SK-N-SH (cell line): ENCODE measurements at regions of chr22 and their contacts with region 1.

Region 1: DNA sequence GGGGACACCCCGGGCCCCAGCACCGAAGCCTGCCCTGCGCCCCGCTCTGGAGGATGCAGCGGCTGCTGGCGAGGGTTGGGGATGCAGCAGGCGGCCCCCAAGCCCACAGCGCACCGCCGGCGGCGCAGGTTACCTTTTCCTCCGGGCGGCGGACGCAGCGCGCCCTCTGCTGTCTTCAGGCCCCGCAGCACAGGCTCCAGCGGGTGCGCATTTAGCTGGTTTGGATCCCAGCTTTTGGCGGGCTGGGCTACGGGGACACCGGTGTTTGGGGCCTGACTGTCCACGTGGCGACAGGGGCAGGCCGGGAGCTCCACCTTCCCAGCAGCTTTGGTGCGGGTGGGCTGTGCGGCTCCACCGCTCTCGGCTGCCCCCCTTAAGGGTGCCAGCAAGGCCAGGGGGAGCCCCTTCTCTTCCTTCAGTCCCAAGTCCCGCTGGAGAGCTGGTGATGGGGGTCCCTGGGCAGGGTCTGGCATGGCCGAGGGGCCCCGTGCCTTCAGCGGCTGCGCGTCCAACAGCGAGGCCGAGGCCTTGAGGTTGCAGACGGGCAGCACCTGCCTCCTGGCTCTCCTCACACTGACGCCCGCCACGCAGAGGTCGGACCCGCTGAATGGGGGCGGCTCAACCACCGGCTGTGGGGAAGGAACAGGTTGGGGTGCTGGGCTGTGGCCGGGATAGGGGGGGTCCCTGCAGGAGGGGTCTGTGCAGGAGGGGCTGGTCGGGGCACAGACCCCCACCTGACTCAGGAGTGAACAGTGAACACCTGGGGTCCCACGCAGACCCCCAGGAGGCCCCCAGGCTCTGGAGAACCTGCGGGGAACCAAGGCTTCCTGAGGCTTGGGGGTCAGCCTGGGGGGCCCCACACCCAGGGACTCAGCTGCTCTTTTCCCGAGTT is 18.0 kb upstream of the IL17REL start:
- DNase-seq: peak; percentile 92
- H3K4me3 ChIP-seq: peak overlapping the region in 1 of 2 experiments; percentile 19; a peak in 1 of 4 replicates
- H3K27ac ChIP-seq: no peak overlapping the region
- H3K4me1 ChIP-seq: peaks cover 0 to 13% of the 10 kb centered on the region in 2 experiments; a peak in 1 of 4 replicates
- H3K27me3 ChIP-seq: no peaks in the 10 kb centered on the region; the same call in 1 of the 2 replicates
- CTCF ChIP-seq: peak; percentile 75
- EP300 ChIP-seq: no peak
- RAD21 ChIP-seq: peak; percentile 80

Region 2: GRCh38 chr22:49917974-49918910 is 112.3 kb before region 1 on chr22 and contains the starts of genes ALG12 and CRELD2:
- CTCF ChIA-PET with region 1: interaction called, 11 read pairs
- POLR2A ChIA-PET with region 1: no interaction called
- DNase-seq: peak; percentile 100
- H3K4me3 ChIP-seq: peak within 1 kb of the TSS; percentile 72 to 83
- H3K27ac ChIP-seq: peak within 1 kb of the TSS; percentile 88 to 93
- H3K4me1 ChIP-seq: peaks cover 0 to 12% of the 10 kb centered on the region in 2 experiments; a peak in 2 of 4 replicates
- H3K27me3 ChIP-seq: no peaks in the 10 kb centered on the region
- CTCF ChIP-seq: no peak
- EP300 ChIP-seq: no peak
- RAD21 ChIP-seq: no peak
- polyA plus RNA-seq, gene ALG12: 7.5 and 9.9 TPM in 2 replicates
- polyA plus RNA-seq, gene CRELD2: 92.5 and 113 TPM in 2 replicates

Region 3: GRCh38 chr22:49962012-49962750 is 68.4 kb before region 1 on chr22:
- CTCF ChIA-PET with region 1: interaction called, 17 read pairs
- POLR2A ChIA-PET with region 1: no interaction called
- DNase-seq: peak; percentile 89
- H3K4me3 ChIP-seq: peak overlapping the region; percentile 67 to 76
- H3K27ac ChIP-seq: peak overlapping the region; percentile 55 to 74; a peak in 3 of 4 replicates
- H3K4me1 ChIP-seq: peaks cover 20 to 29% of the 10 kb centered on the region in 2 experiments; a peak in 2 of 4 replicates
- H3K27me3 ChIP-seq: no peaks in the 10 kb centered on the region
- CTCF ChIP-seq: no peak
- EP300 ChIP-seq: peak in 1 of 2 experiments; percentile 11; a peak in 1 of 4 replicates
- RAD21 ChIP-seq: no peak

Region 4: DNA sequence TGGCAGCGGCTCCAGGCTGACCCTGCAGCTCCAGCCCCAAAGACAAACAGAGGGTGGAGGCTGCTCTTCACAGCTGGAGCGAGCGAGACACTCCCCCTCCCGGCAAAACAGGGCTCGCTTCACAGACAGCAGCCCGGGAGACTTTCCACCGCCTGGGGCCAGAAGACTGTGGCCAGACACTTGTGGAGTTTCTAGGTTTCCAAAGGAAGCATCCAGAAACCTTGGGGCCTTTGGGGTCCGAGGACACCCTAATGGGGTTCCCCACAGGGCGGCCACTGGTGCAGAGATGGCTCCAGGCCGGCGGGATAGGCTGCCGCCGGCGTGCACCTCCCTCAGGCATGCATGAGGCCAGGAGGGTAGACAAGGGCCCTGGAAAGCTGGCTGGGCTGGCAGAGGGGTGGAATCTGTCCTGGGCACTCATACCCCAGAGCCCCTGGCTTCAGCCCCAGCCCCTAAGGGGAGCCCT is 17.8 kb before region 1 on chr22 and contains the start of gene IL17REL:
- CTCF ChIA-PET with region 1: interaction called, 20 read pairs
- POLR2A ChIA-PET with region 1: no interaction called
- DNase-seq: peak; percentile 43
- H3K4me3 ChIP-seq: no peak within 1 kb of the TSS
- H3K27ac ChIP-seq: no peak within 1 kb of the TSS
- H3K4me1 ChIP-seq: no peaks in the 10 kb centered on the region
- H3K27me3 ChIP-seq: peaks cover 67% of the 10 kb centered on the region
- CTCF ChIP-seq: no peak
- EP300 ChIP-seq: no peak
- RAD21 ChIP-seq: no peak
- polyA plus RNA-seq, gene IL17REL: not detected in 2 replicates

Region 5: GRCh38 chr22:50048061-50048765 is 17.7 kb after region 1 on chr22:
- CTCF ChIA-PET with region 1: interaction called, 12 read pairs
- POLR2A ChIA-PET with region 1: no interaction called
- DNase-seq: no peak
- H3K4me3 ChIP-seq: no peak overlapping the region
- H3K27ac ChIP-seq: no peak overlapping the region
- H3K4me1 ChIP-seq: no peaks in the 10 kb centered on the region
- H3K27me3 ChIP-seq: peaks cover 12% of the 10 kb centered on the region
- CTCF ChIP-seq: no peak
- EP300 ChIP-seq: no peak
- RAD21 ChIP-seq: no peak

Region 6: GRCh38 chr22:50067244-50067643 is 36.7 kb after region 1 on chr22:
- CTCF ChIA-PET with region 1: interaction called, 14 read pairs
- POLR2A ChIA-PET with region 1: no interaction called
- DNase-seq: no peak
- H3K4me3 ChIP-seq: no peak overlapping the region
- H3K27ac ChIP-seq: no peak overlapping the region
- H3K4me1 ChIP-seq: no peaks in the 10 kb centered on the region
- H3K27me3 ChIP-seq: 0 out of 2 replicates have a peak, but pooled peaks cover 5% of the 10 kb centered on the region
- CTCF ChIP-seq: no peak
- EP300 ChIP-seq: no peak
- RAD21 ChIP-seq: no peak

Region 7: GRCh38 chr22:50485201-50486131 is 454.9 kb after region 1 on chr22:
- CTCF ChIA-PET with region 1: no interaction called
- POLR2A ChIA-PET with region 1: no interaction called
- DNase-seq: no peak
- H3K4me3 ChIP-seq: no peak overlapping the region
- H3K27ac ChIP-seq: no peak overlapping the region
- H3K4me1 ChIP-seq: peaks cover 0 to 2% of the 10 kb centered on the region in 2 experiments; a peak in 1 of 4 replicates
- H3K27me3 ChIP-seq: peaks cover 6% of the 10 kb centered on the region; the same call in 1 of the 2 replicates
- CTCF ChIP-seq: no peak
- EP300 ChIP-seq: no peak
- RAD21 ChIP-seq: no peak